Activated CD8-positive, alpha-beta memory T cell treated with anti-CD3 and anti-CD28 coated beads, Interleukin-2, amount 10 ng/mL, durations not matched to agents 7 days and 5 days (primary cell): ENCODE measurements at regions of chr13 and their contacts with region 1.

Region 1: DNA sequence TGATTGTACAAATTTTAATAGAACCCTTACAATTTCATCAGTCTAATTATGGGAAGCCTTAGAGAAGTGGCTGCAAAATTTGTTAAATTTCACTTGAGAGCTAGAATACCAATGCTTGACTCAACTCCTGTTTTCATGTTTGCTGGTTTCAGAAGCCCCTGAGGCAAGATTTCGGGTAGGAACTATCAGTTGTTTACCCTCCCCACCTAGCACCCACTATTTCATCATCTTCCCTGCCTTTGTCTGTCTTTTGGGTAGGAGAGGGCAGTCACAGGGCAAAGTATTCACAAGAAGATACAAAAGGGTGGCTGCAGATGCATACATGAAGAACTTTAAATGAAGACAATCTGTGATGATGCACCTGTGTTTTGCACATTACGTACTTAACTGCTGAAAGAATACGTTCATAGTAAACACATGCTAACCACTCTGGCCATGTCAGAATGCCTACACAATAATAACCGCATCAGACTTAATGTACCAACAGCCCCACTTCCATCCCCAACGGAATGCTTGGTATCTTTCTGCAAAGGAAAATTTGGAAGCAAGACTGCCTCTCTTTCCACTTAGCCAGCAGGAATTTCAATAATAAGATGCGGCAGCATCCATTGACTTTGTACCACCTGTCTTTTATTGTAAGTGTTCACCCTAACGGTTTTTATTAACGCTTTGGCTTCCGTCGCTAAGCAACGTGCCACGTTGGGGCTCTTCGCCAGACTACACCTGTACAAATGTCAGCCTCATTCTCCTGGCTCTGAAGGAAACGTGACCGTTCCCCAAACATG is 30.4 kb downstream of the TPT1 start:
- DNase-seq: no peak
- ATAC-seq: peak; percentile 21
- H3K4me3 Mint-ChIP-seq: peak overlapping the region; percentile 77
- H3K27ac Mint-ChIP-seq: no peak overlapping the region
- H3K4me1 Mint-ChIP-seq: peaks cover 18% of the 10 kb centered on the region
- H3K27me3 Mint-ChIP-seq: peaks cover 25% of the 10 kb centered on the region

Region 2: GRCh38 chr13:45042539-45042938 is 268.0 kb before region 1 on chr13:
- CTCF ChIA-PET with region 1: interaction called, 66 read pairs
- DNase-seq: no peak
- ATAC-seq: no peak
- H3K4me3 Mint-ChIP-seq: no peak overlapping the region
- H3K27ac Mint-ChIP-seq: no peak overlapping the region
- H3K4me1 Mint-ChIP-seq: peaks cover 11% of the 10 kb centered on the region
- H3K27me3 Mint-ChIP-seq: peaks cover 28% of the 10 kb centered on the region

Region 3: GRCh38 chr13:45047394-45048310 is 262.9 kb before region 1 on chr13:
- CTCF ChIA-PET with region 1: interaction called, 66 read pairs
- DNase-seq: peak; percentile 84
- ATAC-seq: peak; percentile 89
- H3K4me3 Mint-ChIP-seq: peak overlapping the region; percentile 70
- H3K27ac Mint-ChIP-seq: no peak overlapping the region
- H3K4me1 Mint-ChIP-seq: peaks cover 29% of the 10 kb centered on the region
- H3K27me3 Mint-ChIP-seq: peaks cover 61% of the 10 kb centered on the region

Region 4: GRCh38 chr13:45109102-45109720 is 201.3 kb before region 1 on chr13:
- CTCF ChIA-PET with region 1: no interaction called
- DNase-seq: peak; percentile 59
- ATAC-seq: peak; percentile 85
- H3K4me3 Mint-ChIP-seq: peak overlapping the region; percentile 10
- H3K27ac Mint-ChIP-seq: no peak overlapping the region
- H3K4me1 Mint-ChIP-seq: peaks cover 15% of the 10 kb centered on the region
- H3K27me3 Mint-ChIP-seq: peaks cover 34% of the 10 kb centered on the region

Region 5: DNA sequence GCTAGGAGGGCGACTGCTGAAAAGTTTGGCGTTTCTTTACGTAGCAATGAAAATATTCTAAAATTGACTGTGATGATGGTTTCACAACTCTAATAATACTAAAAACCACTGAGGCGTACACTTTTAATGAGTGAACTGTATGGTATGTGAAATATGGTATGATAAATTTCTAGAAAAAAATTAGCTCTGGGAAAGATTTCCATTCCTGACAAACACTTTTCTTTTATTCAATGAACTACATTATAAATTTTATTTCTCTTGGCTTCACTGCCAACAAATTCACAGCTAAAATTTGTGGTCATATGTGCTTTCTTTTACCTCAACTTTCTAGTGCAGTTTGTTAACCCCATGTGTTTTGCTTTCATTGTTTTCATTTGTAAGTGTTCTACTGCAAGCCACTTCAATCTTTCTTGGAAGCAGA is 730.9 kb after region 1 on chr13:
- CTCF ChIA-PET with region 1: no interaction called
- DNase-seq: no peak
- ATAC-seq: no peak
- H3K4me3 Mint-ChIP-seq: no peak overlapping the region
- H3K27ac Mint-ChIP-seq: no peak overlapping the region
- H3K4me1 Mint-ChIP-seq: peaks cover 8% of the 10 kb centered on the region
- H3K27me3 Mint-ChIP-seq: no peaks in the 10 kb centered on the region